Common myeloid progenitor, CD34-positive (primary cell): ENCODE measurements at regions of chr16 and their contacts with region 1.

Region 1: DNA sequence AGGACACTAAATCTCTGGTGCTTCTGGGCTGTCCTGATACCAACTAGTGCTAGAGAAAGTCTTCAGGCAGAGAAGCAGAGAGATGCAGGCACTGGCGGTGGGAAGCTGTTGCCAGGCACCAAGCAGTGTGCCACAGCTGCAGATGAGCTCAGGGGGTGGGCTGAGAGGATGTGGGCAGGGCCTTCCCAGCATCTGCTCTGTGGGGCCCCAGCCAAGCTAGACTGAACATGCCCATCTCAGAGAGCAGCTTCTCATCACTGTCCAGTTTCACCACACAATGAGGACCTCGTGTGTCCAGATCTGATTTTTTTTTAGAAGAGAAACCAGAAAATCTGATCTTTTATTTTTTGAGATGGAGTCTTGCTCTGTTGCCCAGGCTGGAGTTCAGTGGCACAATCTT is 17.1 kb downstream of the PSKH1 start:
- DNase-seq: peak in 2 of 3 donors; percentile 65 to 68
- H3K4me3 ChIP-seq: no peak overlapping the region
- H3K27ac ChIP-seq: peak overlapping the region in 1 of 2 experiments; percentile 10
- H3K4me1 ChIP-seq: peaks cover 0 to 15% (median 3%) of the 10 kb centered on the region in 4 experiments
- H3K27me3 ChIP-seq: no peaks in the 10 kb centered on the region

Region 2: GRCh38 chr16:67892899-67893742 is 17.0 kb before region 1 on chr16 and contains the start of gene PSKH1:
- CTCF ChIA-PET with region 1: interaction called, 216 read pairs
- POLR2A ChIA-PET with region 1: no interaction called
- DNase-seq: peak; percentile 93 to 94 (median 94)
- H3K4me3 ChIP-seq: peak within 1 kb of the TSS; percentile 87 to 98 (median 94)
- H3K27ac ChIP-seq: peak within 1 kb of the TSS; percentile 91 to 96
- H3K4me1 ChIP-seq: peaks cover 11 to 19% (median 14%) of the 10 kb centered on the region in 4 experiments
- H3K27me3 ChIP-seq: no peaks in the 10 kb centered on the region

Region 3: DNA sequence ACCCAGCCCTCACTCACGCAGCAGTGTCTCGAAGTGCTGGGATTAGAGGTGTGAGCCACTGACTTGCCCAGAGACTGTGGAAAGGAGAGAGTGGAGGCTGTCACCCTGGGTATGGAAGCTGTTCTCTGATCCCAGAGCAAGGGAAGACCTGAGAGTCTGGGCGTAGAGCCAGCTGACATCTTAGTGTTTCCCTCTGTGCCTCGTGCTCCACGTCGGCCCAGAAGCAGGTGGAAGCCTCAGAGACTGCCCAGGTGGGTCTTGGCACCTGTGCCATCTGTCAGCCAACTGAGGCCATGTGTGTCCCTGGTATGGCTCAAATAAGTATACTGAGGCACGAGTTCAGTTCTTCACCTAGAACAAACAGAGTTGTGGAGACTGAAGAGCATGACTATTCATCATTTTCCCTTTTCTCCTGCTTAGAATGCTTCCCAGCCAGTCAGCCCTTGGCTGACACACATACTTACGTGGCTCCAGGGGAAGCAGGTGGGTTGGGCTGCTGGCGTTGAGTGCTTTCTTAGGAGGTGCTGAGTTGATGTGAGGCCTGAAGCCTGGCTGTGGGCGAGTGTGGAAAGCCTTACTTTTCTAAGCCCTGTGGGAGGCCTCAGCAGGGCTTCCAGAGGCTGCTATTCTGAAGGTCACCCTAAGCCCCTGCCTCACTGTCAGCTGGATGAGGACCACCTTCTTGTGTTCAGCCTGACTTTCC is 13.4 kb after region 1 on chr16:
- CTCF ChIA-PET with region 1: interaction called, 16 read pairs
- POLR2A ChIA-PET with region 1: no interaction called
- DNase-seq: no peak
- H3K4me3 ChIP-seq: no peak overlapping the region
- H3K27ac ChIP-seq: no peak overlapping the region
- H3K4me1 ChIP-seq: peaks cover 0 to 15% (median 3%) of the 10 kb centered on the region in 4 experiments
- H3K27me3 ChIP-seq: no peaks in the 10 kb centered on the region

Region 4: GRCh38 chr16:67935402-67936123 is 25.4 kb after region 1 on chr16:
- CTCF ChIA-PET with region 1: interaction called, 11 read pairs
- POLR2A ChIA-PET with region 1: interaction called, 3 read pairs
- DNase-seq: peak; percentile 91 to 96 (median 95)
- H3K4me3 ChIP-seq: peak overlapping the region; percentile 85 to 99 (median 96)
- H3K27ac ChIP-seq: peak overlapping the region; percentile 64 to 88
- H3K4me1 ChIP-seq: peaks cover 4 to 31% (median 29%) of the 10 kb centered on the region in 4 experiments
- H3K27me3 ChIP-seq: no peaks in the 10 kb centered on the region